IMR-90 (cell line): ENCODE measurements at regions of chr12 and their contacts with region 1.

Region 1: GRCh38 chr12:5442251-5443006 is 10.5 kb downstream of the NTF3 start:
- DNase-seq: peak; percentile 73
- ATAC-seq: peak; percentile 78
- H3K4me3 ChIP-seq: no peak overlapping the region
- H3K27ac ChIP-seq: peak overlapping the region; percentile 30; the same call in 1 of the 2 replicates
- H3K4me1 ChIP-seq: peaks cover 30% of the 10 kb centered on the region
- H3K27me3 ChIP-seq: no peaks in the 10 kb centered on the region
- CTCF ChIP-seq: peak; percentile 77
- POLR2A ChIP-seq: no peak
- RAD21 ChIP-seq: peak; percentile 81

Region 2: GRCh38 chr12:5071496-5071895 is 370.9 kb before region 1 on chr12:
- CTCF ChIA-PET with region 1: no interaction called
- POLR2A ChIA-PET with region 1: no interaction called
- dilution Hi-C with region 1: no loop called
- in situ Hi-C with region 1: no loop called
- intact Hi-C with region 1: no loop called
- DNase-seq: no peak
- ATAC-seq: no peak
- H3K4me3 ChIP-seq: no peak overlapping the region
- H3K27ac ChIP-seq: no peak overlapping the region
- H3K4me1 ChIP-seq: no peaks in the 10 kb centered on the region
- H3K27me3 ChIP-seq: peaks cover 19% of the 10 kb centered on the region
- CTCF ChIP-seq: no peak
- POLR2A ChIP-seq: no peak
- RAD21 ChIP-seq: no peak

Region 3: DNA sequence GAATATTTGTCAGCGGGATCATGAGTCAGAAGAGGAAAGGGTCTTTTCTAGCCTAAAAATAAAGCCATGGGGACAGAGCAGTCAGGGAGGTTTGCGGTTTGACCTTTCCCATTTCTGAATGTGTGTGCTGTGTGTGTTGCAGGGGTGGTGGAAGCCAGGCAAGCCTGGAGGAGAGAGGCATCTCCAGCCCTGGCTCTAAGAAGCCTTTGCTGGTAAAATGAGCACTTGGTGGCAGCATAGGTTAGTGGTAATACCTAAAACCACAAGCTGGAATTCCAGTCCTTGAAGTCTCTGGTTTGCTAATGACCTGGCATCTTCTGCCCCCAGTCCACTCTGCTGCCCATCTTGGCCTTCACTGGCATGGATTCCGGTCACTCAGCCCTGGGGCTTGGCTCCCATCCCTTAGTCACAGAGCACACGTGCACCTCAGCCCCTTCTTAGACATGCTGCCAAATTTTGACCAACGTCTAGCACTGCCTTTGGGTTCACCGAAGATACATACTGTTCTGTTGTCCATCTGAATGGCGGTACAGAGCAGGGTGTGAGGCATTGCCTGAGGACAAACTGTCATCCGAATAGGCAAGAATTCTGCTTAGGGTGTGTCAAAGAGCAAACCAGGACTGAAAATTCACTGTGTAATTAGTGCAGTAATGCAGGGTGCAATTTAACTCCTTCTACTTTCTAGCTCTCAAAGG is 346.0 kb before region 1 on chr12:
- CTCF ChIA-PET with region 1: interaction called, 3 read pairs
- POLR2A ChIA-PET with region 1: no interaction called
- dilution Hi-C with region 1: no loop called
- in situ Hi-C with region 1: loop called (anchors 5 kb)
- intact Hi-C with region 1: no loop called
- DNase-seq: peak; percentile 92
- ATAC-seq: peak; percentile 87
- H3K4me3 ChIP-seq: no peak overlapping the region
- H3K27ac ChIP-seq: peak overlapping the region; percentile 8; the same call in 1 of the 2 replicates
- H3K4me1 ChIP-seq: peaks cover 21% of the 10 kb centered on the region
- H3K27me3 ChIP-seq: no peaks in the 10 kb centered on the region
- CTCF ChIP-seq: peak; percentile 53
- POLR2A ChIP-seq: no peak
- RAD21 ChIP-seq: peak; percentile 68

Region 4: DNA sequence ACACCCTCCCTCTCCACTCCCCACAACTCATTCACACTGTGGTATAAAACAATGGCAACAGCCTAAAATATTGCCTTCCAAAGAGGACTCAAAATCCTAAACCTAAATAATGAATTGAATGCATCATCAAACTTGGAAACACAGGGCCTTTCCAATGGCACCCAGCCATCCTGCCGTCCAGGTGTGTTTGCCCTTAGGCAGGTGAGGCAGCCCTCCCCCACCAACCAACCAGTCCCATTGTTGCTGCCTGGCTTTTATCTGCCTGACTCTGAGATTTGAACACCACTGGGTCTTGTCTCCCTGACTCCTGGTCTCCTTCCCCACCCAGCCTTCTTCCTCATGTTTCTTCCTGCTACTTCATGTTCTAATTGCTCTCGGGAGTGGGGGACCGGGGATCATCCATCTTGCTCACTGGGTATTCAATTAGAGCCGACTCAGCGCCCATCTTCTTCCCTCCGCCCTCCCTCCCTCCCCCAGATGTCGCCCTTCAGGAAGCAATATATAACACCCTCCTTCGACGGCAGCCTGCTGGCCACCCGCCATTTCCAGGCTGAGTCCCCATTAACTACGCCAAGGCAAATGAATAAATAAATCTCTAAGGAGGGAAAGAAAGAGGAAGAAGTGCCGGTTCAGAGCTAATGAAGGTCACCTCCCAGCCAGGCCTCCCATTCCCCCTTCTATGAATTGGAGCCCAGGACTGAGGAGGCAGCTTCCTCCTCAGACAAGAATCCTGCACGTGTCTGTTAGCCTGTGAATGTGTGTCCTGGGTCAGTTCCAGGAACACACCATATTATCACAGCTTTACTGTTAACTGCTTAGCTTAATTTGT is 46.8 kb before region 1 on chr12:
- CTCF ChIA-PET with region 1: no interaction called
- POLR2A ChIA-PET with region 1: no interaction called
- dilution Hi-C with region 1: no loop called
- in situ Hi-C with region 1: no loop called
- intact Hi-C with region 1: no loop called
- DNase-seq: no peak
- ATAC-seq: no peak
- H3K4me3 ChIP-seq: no peak overlapping the region
- H3K27ac ChIP-seq: no peak overlapping the region
- H3K4me1 ChIP-seq: no peaks in the 10 kb centered on the region
- H3K27me3 ChIP-seq: peaks cover 14% of the 10 kb centered on the region
- CTCF ChIP-seq: no peak
- POLR2A ChIP-seq: no peak
- RAD21 ChIP-seq: no peak

Region 5: GRCh38 chr12:5493018-5493417 is 50.6 kb after region 1 on chr12:
- CTCF ChIA-PET with region 1: interaction called, 4 read pairs
- POLR2A ChIA-PET with region 1: no interaction called
- dilution Hi-C with region 1: no loop called
- in situ Hi-C with region 1: no loop called
- intact Hi-C with region 1: loop called (anchors 5 kb)
- DNase-seq: no peak
- ATAC-seq: no peak
- H3K4me3 ChIP-seq: no peak overlapping the region
- H3K27ac ChIP-seq: no peak overlapping the region; the same call in 1 of the 2 replicates
- H3K4me1 ChIP-seq: peaks cover 39% of the 10 kb centered on the region
- H3K27me3 ChIP-seq: no peaks in the 10 kb centered on the region
- CTCF ChIP-seq: peak; percentile 29
- POLR2A ChIP-seq: no peak
- RAD21 ChIP-seq: peak; percentile 30; the same call in 1 of the 2 replicates